HCT116 (cell line): ENCODE measurements at regions of chr9 and their contacts with region 1.

Region 1: DNA sequence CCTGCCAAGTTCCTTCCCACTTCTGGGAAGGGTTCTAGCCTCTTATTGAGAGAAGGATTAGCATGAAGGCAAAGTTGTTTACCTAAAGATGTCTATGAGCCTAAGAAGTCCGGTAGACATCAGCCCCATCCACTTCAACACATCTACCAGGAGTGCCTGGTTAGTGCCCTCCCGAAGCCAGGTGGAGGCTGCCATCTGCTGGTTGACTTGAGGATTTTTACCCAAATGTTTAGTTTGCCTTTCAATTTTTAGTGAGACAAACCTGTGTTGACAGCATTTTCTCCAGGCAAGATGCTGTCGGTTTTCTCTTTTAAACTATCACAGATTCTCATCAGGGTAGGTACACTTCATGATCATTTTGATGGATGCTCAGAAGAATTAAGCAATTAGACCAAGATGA is 83.6 kb upstream of the TNFSF8 start:
- DNase-seq: peak; percentile 48
- ATAC-seq: peak; percentile 74
- H3K4me3 ChIP-seq: no peak overlapping the region
- H3K27ac ChIP-seq: no peak overlapping the region
- H3K4me1 ChIP-seq: no peaks in the 10 kb centered on the region
- H3K27me3 ChIP-seq: peaks cover 28% of the 10 kb centered on the region; the same call in 1 of the 2 replicates
- CTCF ChIP-seq: peak; percentile 61 to 87 (median 78)
- POLR2A ChIP-seq: no peak
- RAD21 ChIP-seq: peak; percentile 93

Region 2: DNA sequence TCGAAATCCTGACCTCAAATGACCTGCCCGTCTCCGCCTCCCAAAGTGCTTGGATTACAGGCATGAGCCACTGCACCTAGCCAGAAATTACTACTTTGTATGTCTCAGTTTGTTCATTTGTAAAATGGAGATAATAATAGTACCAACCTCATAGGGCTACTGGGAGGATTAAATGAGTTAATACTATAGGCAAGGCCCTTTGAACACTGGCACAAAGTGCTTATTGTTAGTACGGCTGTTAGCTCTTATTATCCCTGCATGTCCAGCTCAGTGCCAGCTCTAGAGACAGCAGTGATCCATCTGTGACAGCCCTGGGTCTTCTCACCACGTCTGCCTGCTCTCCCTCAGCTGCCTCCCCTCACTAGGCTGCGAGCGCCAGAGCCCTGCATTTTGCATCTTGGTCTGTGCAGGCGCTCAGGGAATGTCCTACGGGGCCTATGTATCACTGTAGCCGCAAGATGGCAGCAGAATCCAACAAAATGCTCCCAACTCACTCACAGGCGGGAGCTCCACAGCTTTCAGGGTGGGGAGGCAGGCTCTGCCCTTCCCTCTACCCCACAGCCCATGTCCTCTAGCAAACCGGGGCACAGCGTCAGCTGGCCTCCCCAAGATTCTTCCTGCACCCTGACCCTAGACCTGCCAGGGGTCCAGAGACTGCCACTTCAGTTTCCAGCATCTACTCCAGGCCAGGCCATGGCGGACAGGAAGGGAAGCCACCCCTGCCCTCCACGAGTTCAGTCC is 608.5 kb before region 1 on chr9:
- CTCF ChIA-PET with region 1: interaction called, 5 read pairs
- POLR2A ChIA-PET with region 1: no interaction called
- RAD21 ChIA-PET with region 1: no interaction called
- intact Hi-C with region 1: loop called (anchors 1 kb)
- DNase-seq: peak; percentile 48
- ATAC-seq: peak; percentile 98
- H3K4me3 ChIP-seq: no peak overlapping the region
- H3K27ac ChIP-seq: no peak overlapping the region
- H3K4me1 ChIP-seq: no peaks in the 10 kb centered on the region
- H3K27me3 ChIP-seq: no peaks in the 10 kb centered on the region
- CTCF ChIP-seq: peak; percentile 78 to 81 (median 80)
- POLR2A ChIP-seq: no peak
- RAD21 ChIP-seq: peak; percentile 93

Region 3: DNA sequence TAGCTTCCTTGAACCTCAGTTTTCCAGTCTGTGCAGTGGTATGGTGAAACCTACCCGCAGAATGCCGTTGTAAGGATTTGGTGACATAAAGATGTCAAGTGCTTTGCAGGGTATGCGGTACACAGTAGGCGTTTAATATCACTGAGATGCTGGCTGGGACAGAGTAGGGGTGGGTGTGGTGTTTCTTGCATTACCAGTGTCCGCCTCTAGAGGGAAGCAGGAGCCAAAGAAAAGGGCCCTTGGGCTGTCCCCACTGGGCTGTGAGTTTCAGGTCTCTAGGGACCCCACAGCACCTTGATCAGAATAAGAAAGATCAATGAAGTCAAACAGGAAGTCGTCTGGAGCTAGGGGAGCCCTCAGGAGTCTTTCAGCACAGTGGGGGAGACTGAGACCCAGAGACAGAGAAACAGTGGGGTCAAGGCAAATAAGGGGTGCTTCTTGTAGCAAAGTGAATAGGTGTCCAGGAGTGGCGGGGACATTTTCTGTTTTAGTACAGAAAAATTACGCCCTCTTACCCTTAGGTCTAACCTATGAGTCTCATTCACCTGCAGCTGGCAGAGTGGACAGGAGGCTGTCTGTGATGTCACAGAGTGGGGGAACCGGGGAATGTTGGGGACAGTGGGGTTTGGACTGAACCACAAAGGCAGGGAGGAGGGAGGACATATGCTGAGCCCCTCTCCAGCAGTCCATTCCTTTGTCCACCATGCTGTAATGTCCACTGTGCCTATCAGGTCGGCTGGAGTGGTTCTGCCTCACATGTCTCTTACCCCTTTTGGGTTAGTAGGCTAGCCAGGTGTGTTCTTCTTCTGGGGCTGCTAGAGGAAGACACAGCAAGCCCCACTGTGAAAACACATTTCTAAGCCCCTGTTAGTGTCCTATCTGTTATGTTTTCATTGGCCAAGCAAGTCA is 351.7 kb before region 1 on chr9:
- CTCF ChIA-PET with region 1: interaction called, 3 read pairs
- POLR2A ChIA-PET with region 1: no interaction called
- RAD21 ChIA-PET with region 1: no interaction called
- intact Hi-C with region 1: loop called (anchors 1 kb)
- DNase-seq: no peak
- ATAC-seq: peak; percentile 96
- H3K4me3 ChIP-seq: no peak overlapping the region
- H3K27ac ChIP-seq: no peak overlapping the region
- H3K4me1 ChIP-seq: no peaks in the 10 kb centered on the region
- H3K27me3 ChIP-seq: peaks cover 18% of the 10 kb centered on the region; the same call in 1 of the 2 replicates
- CTCF ChIP-seq: peak; percentile 74 to 89 (median 86)
- POLR2A ChIP-seq: no peak
- RAD21 ChIP-seq: peak; percentile 82

Region 4: DNA sequence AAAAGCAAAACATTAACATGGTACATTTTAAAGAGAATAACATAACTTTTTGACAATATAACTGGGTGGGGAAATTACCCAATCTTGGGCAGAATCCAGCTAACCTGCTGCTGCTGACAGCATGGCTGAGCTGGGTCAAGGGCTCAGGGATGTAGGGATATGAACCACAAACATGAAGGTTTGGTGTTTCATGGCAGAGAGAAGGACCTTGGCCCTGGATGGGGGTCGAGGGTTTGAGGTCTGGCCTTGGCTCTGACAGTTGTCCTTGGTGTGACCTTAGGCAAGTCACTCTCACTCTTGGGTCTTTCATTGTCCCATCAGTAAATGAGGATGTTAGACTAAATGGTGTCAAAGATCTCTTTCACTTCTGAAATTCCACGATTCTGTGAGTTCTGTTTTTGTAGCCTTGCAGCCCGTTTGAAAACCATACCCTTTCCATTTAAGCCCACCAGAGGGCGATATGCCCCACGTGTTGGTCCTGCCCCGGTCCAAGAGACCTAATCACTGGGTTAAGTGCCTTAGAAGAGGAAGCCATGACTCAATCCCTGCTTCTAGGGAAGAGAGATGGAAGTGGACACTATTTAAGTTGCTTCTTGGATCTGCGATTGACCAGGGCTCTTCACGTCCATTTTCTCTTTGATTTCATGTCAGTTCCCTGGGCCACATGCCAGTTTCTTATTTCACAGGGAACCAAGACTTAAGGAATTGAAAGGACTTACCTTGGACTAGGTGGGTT is 275.2 kb before region 1 on chr9:
- CTCF ChIA-PET with region 1: interaction called, 5 read pairs
- POLR2A ChIA-PET with region 1: interaction called, 3 read pairs
- RAD21 ChIA-PET with region 1: no interaction called
- intact Hi-C with region 1: loop called (anchors 1 kb)
- DNase-seq: peak; percentile 63
- ATAC-seq: peak; percentile 96
- H3K4me3 ChIP-seq: no peak overlapping the region
- H3K27ac ChIP-seq: no peak overlapping the region
- H3K4me1 ChIP-seq: peaks cover 0 to 5% of the 10 kb centered on the region in 2 experiments; a peak in 1 of 4 replicates
- H3K27me3 ChIP-seq: 0 out of 2 replicates have a peak, but pooled peaks cover 5% of the 10 kb centered on the region
- CTCF ChIP-seq: peak; percentile 78 to 91 (median 89)
- POLR2A ChIP-seq: no peak
- RAD21 ChIP-seq: peak; percentile 95

Region 5: GRCh38 chr9:114914139-114914538 is 99.9 kb before region 1 on chr9:
- CTCF ChIA-PET with region 1: interaction called, 5 read pairs
- POLR2A ChIA-PET with region 1: no interaction called
- RAD21 ChIA-PET with region 1: no interaction called
- intact Hi-C with region 1: loop called (anchors 1 kb)
- DNase-seq: no peak
- ATAC-seq: peak; percentile 76
- H3K4me3 ChIP-seq: no peak overlapping the region
- H3K27ac ChIP-seq: no peak overlapping the region
- H3K4me1 ChIP-seq: peaks cover 0 to under 1% of the 10 kb centered on the region in 2 experiments; a peak in 1 of 4 replicates
- H3K27me3 ChIP-seq: peaks cover 28% of the 10 kb centered on the region; the same call in 1 of the 2 replicates
- CTCF ChIP-seq: peak; percentile 43 to 59 (median 51); a peak in 5 of 6 replicates
- POLR2A ChIP-seq: no peak
- RAD21 ChIP-seq: peak; percentile 50